WTC11 (cell line): ENCODE measurements at regions of chr15 and their contacts with region 1.

Region 1: DNA sequence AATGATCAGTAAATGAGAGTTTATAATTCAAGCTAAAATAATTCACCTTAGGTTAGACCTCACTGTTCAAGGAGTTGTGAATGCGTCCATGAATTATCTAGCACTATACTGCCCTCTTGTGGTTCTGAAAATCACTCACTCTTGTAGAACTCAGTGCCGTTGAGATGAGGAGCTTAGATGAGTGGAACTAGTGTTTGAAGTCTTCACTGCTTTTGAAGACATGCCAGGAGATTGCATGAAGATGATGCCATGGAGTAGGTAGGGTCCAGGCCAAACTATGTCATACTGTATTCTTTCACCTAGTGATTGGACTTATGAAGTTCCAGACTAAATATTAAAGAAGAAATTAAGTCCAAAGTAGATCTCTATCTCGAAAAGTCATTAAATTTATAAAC is 28.8 kb downstream of the LYSMD4 start:
- DNase-seq: no peak
- ATAC-seq: peak; percentile 84
- H3K4me3 Mint-ChIP-seq: no peak overlapping the region
- H3K27ac Mint-ChIP-seq: 0 out of 2 replicates have a peak overlapping the region, but pooled peaks have one; percentile 0
- H3K4me1 Mint-ChIP-seq: peaks cover 22% of the 10 kb centered on the region
- H3K27me3 Mint-ChIP-seq: no peaks in the 10 kb centered on the region
- CTCF ChIP-seq: 0 out of 2 replicates have a peak, but pooled peaks have one; percentile 32

Region 2: GRCh38 chr15:99250494-99251435 is 453.7 kb before region 1 on chr15:
- CTCF ChIA-PET with region 1: interaction called, 11 read pairs
- POLR2A ChIA-PET with region 1: no interaction called
- DNase-seq: peak; percentile 98
- ATAC-seq: peak; percentile 98
- H3K4me3 Mint-ChIP-seq: no peak overlapping the region
- H3K27ac Mint-ChIP-seq: peak overlapping the region; percentile 97
- H3K4me1 Mint-ChIP-seq: peaks cover 25% of the 10 kb centered on the region
- H3K27me3 Mint-ChIP-seq: no peaks in the 10 kb centered on the region
- CTCF ChIP-seq: no peak

Region 3: DNA sequence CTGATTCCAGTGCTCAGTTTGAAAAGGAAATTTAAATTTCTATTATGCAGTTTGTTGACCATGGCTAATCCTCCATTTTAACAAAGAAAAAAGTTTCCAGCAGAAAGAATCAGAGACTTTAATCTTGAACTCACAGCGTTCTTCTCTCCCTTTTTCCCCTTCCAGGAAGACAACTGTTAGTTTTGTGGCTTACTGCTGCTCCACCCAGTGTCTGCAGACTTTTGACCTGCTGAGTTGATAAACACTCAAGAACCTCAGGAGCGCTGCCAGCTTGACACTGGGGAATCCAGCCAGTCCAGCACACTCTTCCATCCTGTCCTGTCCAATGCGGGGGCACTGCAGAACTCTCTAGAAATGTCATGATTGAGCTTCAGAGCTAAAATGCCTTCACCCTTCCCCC is 318.6 kb before region 1 on chr15:
- CTCF ChIA-PET with region 1: interaction called, 48 read pairs
- POLR2A ChIA-PET with region 1: no interaction called
- DNase-seq: no peak
- ATAC-seq: no peak
- H3K4me3 Mint-ChIP-seq: no peak overlapping the region
- H3K27ac Mint-ChIP-seq: peak overlapping the region; percentile 29; the same call in 1 of the 2 replicates
- H3K4me1 Mint-ChIP-seq: peaks cover 27% of the 10 kb centered on the region
- H3K27me3 Mint-ChIP-seq: peaks cover 3% of the 10 kb centered on the region; the same call in 1 of the 2 replicates
- CTCF ChIP-seq: no peak

Region 4: DNA sequence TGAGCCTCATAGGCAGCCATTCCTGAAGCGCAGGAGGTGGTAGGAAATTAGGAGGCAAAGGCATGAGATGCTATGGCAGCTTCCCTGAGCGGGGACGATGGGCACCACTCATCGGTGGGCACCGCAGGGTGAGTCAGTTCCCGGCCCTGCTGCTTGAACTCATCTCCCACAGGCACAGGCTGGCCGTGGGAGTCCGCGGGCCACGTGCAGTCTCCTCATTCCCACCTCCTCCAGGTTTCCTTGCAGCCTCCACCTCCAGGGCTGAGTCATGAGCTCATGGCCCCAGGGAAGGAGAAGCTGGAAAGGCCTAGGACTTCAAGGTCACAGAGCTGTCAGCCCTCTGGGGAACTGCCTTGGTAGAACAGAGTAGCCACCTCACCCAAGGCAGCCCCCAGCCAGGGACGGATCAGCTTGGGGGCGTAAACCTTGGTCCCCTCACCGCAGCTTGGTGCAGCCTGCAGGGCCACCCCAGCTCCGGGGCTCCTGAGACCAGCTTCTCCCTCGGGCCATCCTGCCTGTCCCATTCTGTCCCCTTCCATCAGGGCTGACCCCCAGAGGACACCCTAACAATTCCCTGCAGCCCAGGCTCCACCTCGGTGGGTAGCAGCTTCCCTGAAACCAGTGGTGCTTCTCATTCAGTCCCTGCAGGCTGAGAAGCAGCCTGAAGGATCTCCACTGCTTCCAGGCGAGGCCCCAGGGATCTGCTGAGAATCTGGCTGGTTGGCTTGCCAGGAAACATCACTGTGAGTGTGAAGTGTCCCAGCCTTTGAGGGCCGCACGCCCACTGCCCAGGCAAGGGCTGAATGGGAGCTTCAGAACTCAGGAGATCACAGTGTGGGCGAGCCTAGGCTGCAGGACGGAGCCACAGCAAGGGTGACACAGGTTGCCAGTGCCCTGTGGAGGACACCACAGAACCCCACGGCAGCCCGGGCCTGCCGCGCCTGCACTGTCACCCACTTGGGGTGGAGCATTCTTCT is 289.4 kb before region 1 on chr15:
- CTCF ChIA-PET with region 1: interaction called, 12 read pairs
- POLR2A ChIA-PET with region 1: no interaction called
- DNase-seq: no peak
- ATAC-seq: no peak
- H3K4me3 Mint-ChIP-seq: no peak overlapping the region
- H3K27ac Mint-ChIP-seq: no peak overlapping the region
- H3K4me1 Mint-ChIP-seq: no peaks in the 10 kb centered on the region; the same call in 1 of the 2 replicates
- H3K27me3 Mint-ChIP-seq: no peaks in the 10 kb centered on the region
- CTCF ChIP-seq: no peak

Region 5: GRCh38 chr15:99504823-99505551 is 199.5 kb before region 1 on chr15:
- CTCF ChIA-PET with region 1: interaction called, 10 read pairs
- POLR2A ChIA-PET with region 1: interaction called, 7 read pairs
- DNase-seq: no peak
- ATAC-seq: peak; percentile 70
- H3K4me3 Mint-ChIP-seq: no peak overlapping the region
- H3K27ac Mint-ChIP-seq: no peak overlapping the region
- H3K4me1 Mint-ChIP-seq: no peaks in the 10 kb centered on the region
- H3K27me3 Mint-ChIP-seq: no peaks in the 10 kb centered on the region
- CTCF ChIP-seq: no peak

Region 6: DNA sequence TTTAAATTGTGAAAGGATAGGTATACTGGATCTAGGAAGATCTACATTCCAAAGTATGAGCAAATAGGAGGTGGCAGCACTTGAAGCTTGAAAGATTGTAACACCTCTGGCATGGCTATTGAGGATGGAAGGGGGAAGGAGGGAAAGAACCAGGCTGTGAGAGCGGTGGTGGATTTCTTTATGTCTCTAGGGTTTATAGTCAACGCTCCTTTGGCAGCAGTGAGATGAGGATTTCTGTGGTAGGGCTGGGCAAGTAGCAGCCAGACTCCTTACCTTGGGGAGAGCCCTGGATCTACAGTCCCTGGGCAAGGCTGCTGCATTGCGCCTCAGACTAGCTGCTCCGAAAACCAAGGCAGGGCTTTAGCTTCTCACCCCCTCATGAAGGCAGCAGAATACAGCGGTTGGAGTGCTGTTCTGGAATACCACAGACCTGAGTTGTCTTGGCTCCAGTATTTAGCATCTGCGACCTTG is 85.5 kb before region 1 on chr15:
- CTCF ChIA-PET with region 1: interaction called, 10 read pairs
- POLR2A ChIA-PET with region 1: no interaction called
- DNase-seq: no peak
- ATAC-seq: peak; percentile 92
- H3K4me3 Mint-ChIP-seq: no peak overlapping the region; the same call in 1 of the 2 replicates
- H3K27ac Mint-ChIP-seq: peak overlapping the region; percentile 85
- H3K4me1 Mint-ChIP-seq: peaks cover 50% of the 10 kb centered on the region
- H3K27me3 Mint-ChIP-seq: no peaks in the 10 kb centered on the region
- CTCF ChIP-seq: no peak

Region 7: GRCh38 chr15:99733268-99734039 is 29.0 kb after region 1 on chr15 and contains the start of gene LYSMD4:
- CTCF ChIA-PET with region 1: interaction called, 80 read pairs
- POLR2A ChIA-PET with region 1: interaction called, 3 read pairs
- DNase-seq: peak; percentile 98
- ATAC-seq: peak; percentile 96
- H3K4me3 Mint-ChIP-seq: peak within 1 kb of the TSS; percentile 84
- H3K27ac Mint-ChIP-seq: peak within 1 kb of the TSS; percentile 97
- H3K4me1 Mint-ChIP-seq: peaks cover 31% of the 10 kb centered on the region
- H3K27me3 Mint-ChIP-seq: peaks cover 7% of the 10 kb centered on the region
- CTCF ChIP-seq: no peak
- total RNA-seq, gene LYSMD4: 14.1 to 15.3 TPM (median 14.9 TPM) in 3 replicates